Activated CD4-positive, alpha-beta memory T cell treated with anti-CD3 and anti-CD28 coated beads for 36 hours (primary cell): ENCODE measurements at regions of chr7 and their contacts with region 1.

Region 1: DNA sequence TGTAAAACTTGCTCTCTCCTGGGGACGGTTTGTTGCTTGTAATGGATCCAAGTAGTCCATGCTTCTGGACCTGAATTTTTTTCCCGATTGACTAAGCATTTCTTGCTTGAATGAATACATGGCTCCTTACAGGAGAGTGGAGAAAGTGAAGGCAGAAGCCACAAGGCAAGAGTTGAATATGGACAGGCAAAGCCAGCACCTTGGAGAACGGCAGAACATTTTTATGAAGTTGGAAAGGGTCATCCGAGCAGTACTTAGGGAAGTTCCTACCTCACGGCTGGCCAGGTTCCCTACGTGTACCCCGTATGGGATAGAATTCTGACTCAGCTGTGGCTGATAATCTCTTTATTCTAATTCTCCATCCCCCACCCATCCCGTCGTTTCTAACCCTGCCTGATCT is 50.6 kb upstream of the MGAM2 start:
- DNase-seq: no peak
- H3K4me3 Mint-ChIP-seq: no peak overlapping the region
- H3K27ac Mint-ChIP-seq: no peak overlapping the region
- H3K4me1 Mint-ChIP-seq: no peaks in the 10 kb centered on the region
- H3K27me3 Mint-ChIP-seq: peaks cover 3% of the 10 kb centered on the region

Region 2: DNA sequence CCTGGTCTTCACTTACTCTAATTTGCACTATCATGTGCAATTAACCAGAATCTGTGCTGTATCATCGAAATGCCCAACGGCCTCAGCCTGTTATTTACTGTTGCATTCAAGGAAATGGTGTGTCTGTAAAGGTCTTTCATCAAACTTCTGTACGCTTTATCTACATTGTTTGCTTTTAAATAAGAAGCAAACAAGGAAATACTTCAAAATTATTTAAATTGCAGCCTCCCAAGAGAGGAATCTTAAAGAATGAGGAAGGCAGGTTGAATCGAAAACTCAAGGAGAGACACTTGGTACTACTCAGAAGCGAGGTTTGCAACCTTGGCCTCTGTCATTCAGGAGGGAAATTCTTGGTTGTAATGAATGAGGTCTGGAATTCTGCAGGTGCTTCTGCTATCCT is 24.6 kb before region 1 on chr7:
- CTCF ChIA-PET with region 1: no interaction called
- POLR2A ChIA-PET with region 1: no interaction called
- intact Hi-C with region 1: no loop called
- DNase-seq: no peak
- H3K4me3 Mint-ChIP-seq: no peak overlapping the region
- H3K27ac Mint-ChIP-seq: no peak overlapping the region
- H3K4me1 Mint-ChIP-seq: no peaks in the 10 kb centered on the region
- H3K27me3 Mint-ChIP-seq: no peaks in the 10 kb centered on the region

Region 3: GRCh38 chr7:142088022-142088714 is 27.2 kb after region 1 on chr7:
- CTCF ChIA-PET with region 1: no interaction called
- POLR2A ChIA-PET with region 1: no interaction called
- intact Hi-C with region 1: loop called (anchors 1 kb)
- DNase-seq: no peak
- H3K4me3 Mint-ChIP-seq: no peak overlapping the region
- H3K27ac Mint-ChIP-seq: no peak overlapping the region
- H3K4me1 Mint-ChIP-seq: no peaks in the 10 kb centered on the region
- H3K27me3 Mint-ChIP-seq: peaks cover 2% of the 10 kb centered on the region